Activated CD4-positive, alpha-beta memory T cell treated with anti-CD3 and anti-CD28 coated beads for 36 hours (primary cell): ENCODE measurements at regions of chr2 and their contacts with region 1.

Region 1: DNA sequence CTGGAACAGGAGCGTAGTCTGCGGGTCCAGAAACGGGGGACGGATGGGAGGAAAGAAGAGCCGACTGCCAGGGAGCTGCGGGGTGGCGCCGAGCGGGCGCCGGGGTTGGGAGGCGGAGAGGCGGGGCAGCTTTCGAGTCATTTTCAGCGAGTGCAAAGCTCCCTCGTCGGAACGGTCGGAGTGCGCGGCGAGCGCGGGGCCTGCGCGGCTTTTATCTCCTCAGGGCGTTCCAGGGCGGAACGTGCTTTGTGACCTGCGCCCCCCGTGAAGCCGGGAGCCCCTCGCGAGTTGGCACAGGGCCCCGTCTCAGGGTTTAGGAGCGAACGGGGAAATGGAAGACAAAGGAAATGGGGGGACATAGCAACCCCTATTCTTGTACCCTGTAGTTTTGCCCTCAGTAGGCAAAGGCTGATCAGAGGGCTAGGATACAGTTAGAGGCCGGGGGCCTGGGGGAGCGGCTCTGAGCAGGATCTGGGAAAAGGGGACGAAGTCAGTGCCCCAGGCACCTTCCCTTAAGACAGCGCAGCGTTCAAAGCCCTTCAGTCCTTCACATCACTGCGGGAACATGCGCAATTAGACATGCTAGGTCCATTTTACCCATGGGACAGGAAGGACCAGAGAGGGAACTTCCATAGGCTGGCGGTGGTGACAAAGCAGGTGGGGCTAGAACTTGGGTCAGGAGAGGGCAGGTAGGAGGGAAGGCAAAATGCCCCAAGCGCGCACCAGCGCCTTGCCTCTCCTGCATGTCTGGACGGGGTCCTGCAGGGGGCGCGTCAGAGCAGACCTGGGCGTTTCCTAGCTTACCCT is 60.1 kb upstream of the IL1RL1 start:
- DNase-seq: peak; percentile 83
- H3K4me3 Mint-ChIP-seq: peak overlapping the region; percentile 66
- H3K27ac Mint-ChIP-seq: peak overlapping the region; percentile 64
- H3K4me1 Mint-ChIP-seq: peaks cover 36% of the 10 kb centered on the region
- H3K27me3 Mint-ChIP-seq: no peaks in the 10 kb centered on the region

Region 2: GRCh38 chr2:102070058-102070642 is 181.1 kb before region 1 on chr2:
- CTCF ChIA-PET with region 1: no interaction called
- POLR2A ChIA-PET with region 1: no interaction called
- intact Hi-C with region 1: no loop called
- DNase-seq: no peak
- H3K4me3 Mint-ChIP-seq: no peak overlapping the region
- H3K27ac Mint-ChIP-seq: no peak overlapping the region
- H3K4me1 Mint-ChIP-seq: peaks cover 19% of the 10 kb centered on the region
- H3K27me3 Mint-ChIP-seq: peaks cover 4% of the 10 kb centered on the region

Region 3: GRCh38 chr2:102235491-102235890 is 15.8 kb before region 1 on chr2:
- CTCF ChIA-PET with region 1: interaction called, 64 read pairs
- POLR2A ChIA-PET with region 1: interaction called, 8 read pairs
- intact Hi-C with region 1: loop called (anchors 1 kb)
- DNase-seq: peak; percentile 56
- H3K4me3 Mint-ChIP-seq: no peak overlapping the region
- H3K27ac Mint-ChIP-seq: peak overlapping the region; percentile 61
- H3K4me1 Mint-ChIP-seq: peaks cover 58% of the 10 kb centered on the region
- H3K27me3 Mint-ChIP-seq: peaks cover 2% of the 10 kb centered on the region

Region 4: GRCh38 chr2:102336502-102336945 is 85.3 kb after region 1 on chr2:
- CTCF ChIA-PET with region 1: interaction called, 15 read pairs
- POLR2A ChIA-PET with region 1: interaction called, 4 read pairs
- intact Hi-C with region 1: no loop called
- DNase-seq: no peak
- H3K4me3 Mint-ChIP-seq: no peak overlapping the region
- H3K27ac Mint-ChIP-seq: no peak overlapping the region
- H3K4me1 Mint-ChIP-seq: peaks cover 7% of the 10 kb centered on the region
- H3K27me3 Mint-ChIP-seq: peaks cover 2% of the 10 kb centered on the region

Region 5: DNA sequence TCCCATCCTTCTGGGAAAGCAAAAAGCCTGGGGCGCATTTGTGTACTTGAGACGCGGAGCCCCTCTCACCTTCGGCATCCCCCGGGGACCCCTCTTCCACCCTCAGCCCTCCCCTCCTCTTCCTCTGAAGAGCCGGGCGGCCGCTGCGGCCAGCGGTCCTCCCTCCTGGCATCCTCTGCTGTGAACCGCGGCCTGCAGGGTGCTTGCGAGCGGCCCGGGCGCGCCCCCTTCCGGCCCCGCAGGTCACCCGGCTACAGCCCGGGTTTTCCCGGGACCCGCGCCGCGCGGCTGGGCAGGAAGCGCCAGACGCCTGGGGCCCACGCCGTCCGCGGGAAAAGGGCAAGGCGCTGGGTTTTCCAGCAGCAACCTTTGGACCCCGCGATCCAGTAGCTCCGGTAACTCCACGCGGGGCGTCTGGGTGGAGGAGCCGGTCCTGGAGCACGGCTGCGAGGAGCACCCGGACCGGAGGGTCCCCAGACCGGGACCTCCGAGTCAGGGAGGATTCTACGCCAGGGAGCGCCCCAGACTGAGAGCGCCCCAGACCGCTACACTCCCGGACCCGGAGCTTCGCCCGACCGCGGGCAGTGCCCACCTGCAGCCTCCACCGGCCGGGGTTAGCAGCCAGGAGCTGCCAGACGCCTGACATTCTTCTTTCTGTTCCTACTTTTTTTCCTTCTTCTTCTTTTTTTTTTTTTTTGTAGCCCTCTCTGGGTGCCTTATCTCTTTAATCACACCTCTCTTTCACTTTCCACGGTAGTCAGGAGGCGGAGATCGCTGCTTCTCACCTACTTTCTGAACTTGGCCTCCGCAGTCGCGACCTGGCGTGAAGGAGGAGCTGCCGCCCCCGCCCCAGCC is 104.5 kb after region 1 on chr2 and contains the start of gene IL18R1:
- CTCF ChIA-PET with region 1: interaction called, 19 read pairs
- POLR2A ChIA-PET with region 1: interaction called, 5 read pairs
- intact Hi-C with region 1: loop called (anchors 1 kb)
- DNase-seq: peak; percentile 81
- H3K4me3 Mint-ChIP-seq: peak within 1 kb of the TSS; percentile 97
- H3K27ac Mint-ChIP-seq: peak within 1 kb of the TSS; percentile 89
- H3K4me1 Mint-ChIP-seq: peaks cover 45% of the 10 kb centered on the region
- H3K27me3 Mint-ChIP-seq: no peaks in the 10 kb centered on the region
- total RNA-seq, gene IL18R1: 25.5 to 26.6 TPM

Region 6: GRCh38 chr2:102449370-102449974 is 198.2 kb after region 1 on chr2:
- CTCF ChIA-PET with region 1: interaction called, 43 read pairs
- POLR2A ChIA-PET with region 1: no interaction called
- intact Hi-C with region 1: no loop called
- DNase-seq: peak; percentile 82
- H3K4me3 Mint-ChIP-seq: no peak overlapping the region
- H3K27ac Mint-ChIP-seq: no peak overlapping the region
- H3K4me1 Mint-ChIP-seq: no peaks in the 10 kb centered on the region
- H3K27me3 Mint-ChIP-seq: peaks cover 1% of the 10 kb centered on the region